PC-3 (cell line): ENCODE measurements at regions of chr7 and their contacts with region 1.

Region 1: GRCh38 chr7:118352854-118353453 is 128.4 kb downstream of the ANKRD7 start:
- DNase-seq: peak; percentile 56
- ATAC-seq: peak; percentile 76
- H3K4me3 ChIP-seq: no peak overlapping the region
- H3K27ac ChIP-seq: no peak overlapping the region
- H3K4me1 ChIP-seq: no peaks in the 10 kb centered on the region
- H3K27me3 ChIP-seq: no peaks in the 10 kb centered on the region
- CTCF ChIP-seq: peak; percentile 55

Region 2: DNA sequence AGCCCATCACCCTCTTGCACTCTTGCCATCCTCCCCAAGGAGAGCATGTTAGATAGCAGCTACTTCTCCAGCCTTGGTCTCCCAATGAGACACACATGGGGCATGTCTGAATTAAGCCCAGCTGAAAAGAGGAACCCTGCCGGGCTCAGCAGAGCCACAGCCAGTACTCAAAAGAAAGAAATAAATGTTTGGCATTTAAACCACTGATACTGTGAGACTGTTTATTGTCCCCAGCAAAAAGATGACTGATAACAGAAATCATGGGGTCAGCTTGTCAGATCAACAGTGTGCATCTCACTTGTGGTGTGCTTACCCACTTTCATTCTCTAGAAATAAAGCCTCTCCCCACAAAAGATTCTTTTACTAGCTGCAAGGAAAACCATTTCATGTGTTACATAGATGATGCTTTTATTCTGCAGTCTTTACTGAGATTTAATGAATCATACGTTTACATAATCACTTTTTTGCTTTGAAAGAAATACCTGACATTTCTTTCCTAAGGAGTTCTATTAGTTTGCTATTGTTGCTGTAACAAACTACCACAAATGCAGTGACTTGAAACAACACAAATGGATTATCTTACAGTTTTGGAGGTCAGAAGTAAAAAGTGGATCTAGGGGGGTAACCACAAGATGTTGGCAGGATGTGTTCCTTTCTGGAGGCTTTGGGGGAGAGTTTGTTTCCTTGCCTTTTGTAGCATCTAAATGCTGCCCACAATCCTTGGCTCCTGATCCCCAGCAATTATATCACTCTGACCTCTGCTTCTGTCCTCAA is 107.5 kb before region 1 on chr7:
- CTCF ChIA-PET with region 1: no interaction called
- POLR2A ChIA-PET with region 1: no interaction called
- intact Hi-C with region 1: no loop called
- DNase-seq: no peak
- ATAC-seq: no peak
- H3K4me3 ChIP-seq: no peak overlapping the region
- H3K27ac ChIP-seq: no peak overlapping the region
- H3K4me1 ChIP-seq: no peaks in the 10 kb centered on the region
- H3K27me3 ChIP-seq: no peaks in the 10 kb centered on the region
- CTCF ChIP-seq: no peak

Region 3: DNA sequence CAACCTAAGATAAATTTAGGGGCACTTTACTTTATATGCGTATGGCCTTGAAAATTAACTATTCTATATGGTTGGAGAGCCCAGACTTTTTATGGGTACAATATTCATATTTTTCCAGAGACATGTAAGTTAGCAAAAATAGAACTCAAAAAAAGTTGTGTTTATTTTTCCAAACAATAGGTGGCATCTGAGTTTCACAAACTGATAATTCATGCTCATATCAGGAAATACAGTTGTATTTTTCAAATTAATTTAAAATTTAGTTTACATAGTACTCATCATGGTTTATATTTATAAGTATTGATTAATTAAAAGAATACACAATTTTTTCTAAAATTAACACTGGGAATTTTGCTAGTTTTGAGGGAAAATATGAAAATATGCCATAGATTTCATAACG is 93.8 kb before region 1 on chr7:
- CTCF ChIA-PET with region 1: no interaction called
- POLR2A ChIA-PET with region 1: no interaction called
- intact Hi-C with region 1: loop called (anchors 5 kb)
- DNase-seq: peak; percentile 19
- ATAC-seq: no peak
- H3K4me3 ChIP-seq: no peak overlapping the region
- H3K27ac ChIP-seq: no peak overlapping the region
- H3K4me1 ChIP-seq: no peaks in the 10 kb centered on the region
- H3K27me3 ChIP-seq: no peaks in the 10 kb centered on the region
- CTCF ChIP-seq: peak; percentile 20; the same call in 1 of the 2 replicates

Region 4: GRCh38 chr7:118590107-118590506 is 237.2 kb after region 1 on chr7:
- CTCF ChIA-PET with region 1: no interaction called
- POLR2A ChIA-PET with region 1: no interaction called
- intact Hi-C with region 1: loop called (anchors 1 kb)
- DNase-seq: peak; percentile 12
- ATAC-seq: peak; percentile 33; the same call in 1 of the 2 replicates
- H3K4me3 ChIP-seq: no peak overlapping the region
- H3K27ac ChIP-seq: no peak overlapping the region
- H3K4me1 ChIP-seq: no peaks in the 10 kb centered on the region
- H3K27me3 ChIP-seq: no peaks in the 10 kb centered on the region
- CTCF ChIP-seq: peak; percentile 31; the same call in 1 of the 2 replicates

Region 5: GRCh38 chr7:118648002-118648401 is 295.0 kb after region 1 on chr7:
- CTCF ChIA-PET with region 1: no interaction called
- POLR2A ChIA-PET with region 1: no interaction called
- intact Hi-C with region 1: loop called (anchors 5 kb)
- DNase-seq: no peak
- ATAC-seq: peak; percentile 48; the same call in 1 of the 2 replicates
- H3K4me3 ChIP-seq: no peak overlapping the region
- H3K27ac ChIP-seq: no peak overlapping the region
- H3K4me1 ChIP-seq: no peaks in the 10 kb centered on the region
- H3K27me3 ChIP-seq: no peaks in the 10 kb centered on the region
- CTCF ChIP-seq: no peak

Region 6: GRCh38 chr7:118731854-118732253 is 378.9 kb after region 1 on chr7:
- CTCF ChIA-PET with region 1: no interaction called
- POLR2A ChIA-PET with region 1: no interaction called
- intact Hi-C with region 1: loop called (anchors 5 kb)
- DNase-seq: no peak
- ATAC-seq: peak; percentile 78
- H3K4me3 ChIP-seq: no peak overlapping the region
- H3K27ac ChIP-seq: no peak overlapping the region
- H3K4me1 ChIP-seq: no peaks in the 10 kb centered on the region
- H3K27me3 ChIP-seq: no peaks in the 10 kb centered on the region
- CTCF ChIP-seq: no peak

Region 7: DNA sequence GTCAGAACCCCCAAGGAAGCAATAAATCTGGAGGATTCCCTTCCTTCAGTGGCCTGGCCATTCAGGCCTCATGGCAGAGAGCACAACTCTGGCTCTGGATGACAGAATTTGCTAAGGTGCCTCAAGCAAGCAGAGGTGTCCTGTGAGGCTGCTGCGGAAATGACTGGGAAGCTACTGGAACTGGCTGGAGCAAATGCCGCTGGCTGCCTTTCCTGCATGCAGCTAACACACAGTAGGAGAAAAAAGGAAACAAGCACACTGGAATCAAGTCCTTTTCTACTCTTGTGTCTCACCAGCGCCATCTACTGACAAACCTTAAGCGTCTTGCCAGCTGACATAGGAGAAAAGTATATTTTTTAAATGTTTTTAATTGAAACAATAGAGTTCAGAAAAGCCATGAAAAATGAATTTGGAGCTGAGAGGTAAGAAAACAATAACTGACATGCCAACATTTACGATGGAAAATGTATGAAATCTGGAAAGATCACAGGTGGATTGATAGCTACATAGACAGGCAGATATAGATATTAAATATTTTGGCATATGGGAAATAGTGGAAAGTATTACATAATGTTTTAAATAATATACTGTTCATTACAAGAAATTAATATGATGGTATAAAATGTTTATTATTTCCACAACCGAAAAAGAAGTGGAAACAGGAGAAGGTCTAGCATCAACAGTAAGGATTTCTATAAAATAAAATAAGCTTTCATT is 823.1 kb after region 1 on chr7:
- CTCF ChIA-PET with region 1: no interaction called
- POLR2A ChIA-PET with region 1: no interaction called
- intact Hi-C with region 1: loop called (anchors 1 kb)
- DNase-seq: peak; percentile 79
- ATAC-seq: peak; percentile 90
- H3K4me3 ChIP-seq: no peak overlapping the region
- H3K27ac ChIP-seq: no peak overlapping the region
- H3K4me1 ChIP-seq: no peaks in the 10 kb centered on the region
- H3K27me3 ChIP-seq: no peaks in the 10 kb centered on the region
- CTCF ChIP-seq: peak; percentile 87